Breast epithelium (tissue), 4 donors: ENCODE measurements at regions of chr11 and their contacts with region 1.

Region 1: DNA sequence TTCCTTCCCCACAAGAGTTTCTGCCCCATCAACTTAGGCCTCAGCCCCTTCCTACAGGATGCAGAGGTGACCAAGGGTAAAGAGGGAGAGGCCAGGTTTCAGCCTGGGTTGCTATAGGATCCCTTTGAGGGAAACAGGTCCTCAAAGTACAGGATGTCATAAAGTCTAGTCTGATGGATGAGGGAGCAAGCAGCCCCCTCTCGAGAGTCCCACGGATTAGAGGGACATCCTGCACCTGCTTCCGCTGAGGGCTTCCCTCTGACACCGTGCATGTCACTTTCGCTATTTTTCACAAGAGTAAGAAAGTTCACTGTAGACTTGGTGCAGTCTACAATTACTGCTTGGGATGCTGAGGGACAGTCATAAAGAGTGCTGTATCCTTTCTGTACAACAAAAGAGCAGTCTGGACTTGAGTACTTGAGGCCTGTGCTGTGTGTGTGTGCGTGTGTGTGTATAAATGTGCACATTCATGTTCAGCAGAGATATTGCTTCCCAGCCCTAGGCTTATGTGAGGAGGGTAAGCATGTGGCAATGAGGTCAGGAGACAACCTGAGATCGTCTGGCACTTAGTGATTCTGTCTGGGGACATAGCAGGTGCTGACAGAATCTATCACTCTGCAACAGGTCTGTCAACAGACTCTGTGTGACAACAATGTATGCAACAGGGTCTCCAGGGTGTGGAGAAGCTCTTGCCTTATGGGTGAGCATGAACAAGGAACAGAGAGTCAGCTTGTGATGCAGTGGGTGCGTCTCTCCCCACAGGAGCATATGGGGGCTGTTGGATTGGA is 18.0 kb upstream of the CHST1 start:
- DNase-seq: peak in 1 of 2 donors; percentile 12
- H3K4me3 ChIP-seq: no peak overlapping the region
- H3K27ac ChIP-seq: no peak overlapping the region
- H3K4me1 ChIP-seq: no peaks in the 10 kb centered on the region
- H3K27me3 ChIP-seq: no peaks in the 10 kb centered on the region
- CTCF ChIP-seq: no peak
- POLR2A ChIP-seq: no peak

Region 2: DNA sequence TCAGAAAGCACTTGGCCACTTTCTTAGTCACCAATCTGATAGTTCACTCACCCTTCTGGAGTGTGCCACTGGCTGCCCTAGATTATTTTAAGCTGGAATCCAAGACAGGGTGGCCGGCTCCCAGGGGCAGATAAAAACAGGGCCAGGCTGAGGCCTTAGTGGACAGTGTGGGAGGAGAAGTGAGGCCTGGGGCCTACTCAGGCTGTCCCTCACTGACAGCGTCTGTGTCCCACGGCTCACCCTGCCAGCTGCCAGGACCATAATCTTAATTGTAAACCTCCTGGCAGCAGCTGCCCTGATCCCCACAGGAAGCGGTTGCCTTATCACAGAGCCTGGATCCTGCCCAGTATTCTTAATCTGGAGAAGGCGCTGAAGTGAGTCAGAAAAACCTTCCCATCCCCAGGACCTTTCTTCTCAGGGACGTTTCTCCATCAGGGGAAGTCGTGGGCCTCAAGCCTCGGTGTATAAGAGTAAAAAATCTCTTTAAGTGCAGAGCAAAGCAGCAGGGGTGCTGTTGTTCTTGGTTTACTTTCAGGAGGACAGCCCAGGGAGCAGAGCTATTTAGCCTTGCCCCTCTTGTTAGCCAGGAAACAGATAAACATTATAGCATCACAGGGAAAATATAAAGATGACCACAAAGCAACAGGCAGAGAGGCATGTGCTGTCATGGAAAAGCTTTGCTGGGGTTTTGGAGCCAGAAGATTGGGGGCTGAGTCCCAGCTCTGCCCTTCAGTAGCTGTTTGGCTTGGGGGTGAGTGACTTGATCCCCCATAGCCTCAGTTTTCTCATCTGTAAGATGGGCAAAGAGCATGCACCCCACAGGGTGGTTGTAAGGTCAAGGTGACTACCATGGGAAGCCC is 917.1 kb before region 1 on chr11:
- intact Hi-C with region 1: no loop called
- DNase-seq: no peak
- H3K4me3 ChIP-seq: no peak overlapping the region
- H3K27ac ChIP-seq: peak overlapping the region; percentile 29 to 69
- H3K4me1 ChIP-seq: no peaks in the 10 kb centered on the region
- H3K27me3 ChIP-seq: no peaks in the 10 kb centered on the region
- CTCF ChIP-seq: no peak
- POLR2A ChIP-seq: no peak

Region 3: DNA sequence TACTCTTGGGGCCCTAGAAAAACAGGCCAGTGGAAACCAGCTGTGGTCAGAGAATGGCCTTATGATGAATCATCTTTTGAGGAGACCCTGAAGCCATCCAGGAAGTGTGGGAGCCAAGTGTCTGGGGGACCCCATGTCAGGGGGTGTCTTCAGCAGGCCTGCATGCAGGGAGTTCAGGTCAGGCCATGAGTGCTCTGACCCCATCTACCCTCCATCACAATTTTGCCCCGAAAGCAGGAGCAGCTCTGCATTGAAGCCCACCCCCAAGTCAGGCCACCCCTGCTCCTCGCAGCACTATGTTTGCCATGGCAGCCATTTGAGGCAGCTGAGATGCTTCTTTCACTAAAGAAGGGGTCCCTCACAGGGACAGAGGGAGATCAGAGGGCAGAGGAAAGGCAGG is 59.4 kb before region 1 on chr11:
- intact Hi-C with region 1: no loop called
- DNase-seq: no peak
- H3K4me3 ChIP-seq: no peak overlapping the region
- H3K27ac ChIP-seq: no peak overlapping the region
- H3K4me1 ChIP-seq: no peaks in the 10 kb centered on the region
- H3K27me3 ChIP-seq: peaks cover 0 to 5% of the 10 kb centered on the region in 2 donors
- CTCF ChIP-seq: no peak
- POLR2A ChIP-seq: no peak

Region 4: GRCh38 chr11:45652781-45653180 is 30.7 kb before region 1 on chr11:
- intact Hi-C with region 1: loop called (anchors 1 kb)
- DNase-seq: no peak
- H3K4me3 ChIP-seq: no peak overlapping the region
- H3K27ac ChIP-seq: no peak overlapping the region
- H3K4me1 ChIP-seq: no peaks in the 10 kb centered on the region
- H3K27me3 ChIP-seq: peaks cover 0 to 20% of the 10 kb centered on the region in 2 donors
- CTCF ChIP-seq: no peak
- POLR2A ChIP-seq: no peak